ENCODE measurements at regions of chr17 and their contacts with region 1.

Region 1: GRCh38 chr17:18038861-18039534 is at the starts of genes ATPAF2 and GID4:
- DNase-seq: peak; percentile 100
- H3K4me3 ChIP-seq: peak within 1 kb of the TSS; percentile 75 to 83
- H3K27ac ChIP-seq: peak within 1 kb of the TSS; percentile 82 to 83
- H3K4me1 ChIP-seq: peaks cover 24% of the 10 kb centered on the region
- H3K27me3 ChIP-seq: no peaks in the 10 kb centered on the region
- CTCF ChIP-seq: peak in 1 of 3 experiments; percentile 15
- POLR2A ChIP-seq: no peak
- total RNA-seq, gene ATPAF2: 42.6 to 63.3 TPM
- total RNA-seq, gene GID4: 28.6 to 36.1 TPM

Region 2: DNA sequence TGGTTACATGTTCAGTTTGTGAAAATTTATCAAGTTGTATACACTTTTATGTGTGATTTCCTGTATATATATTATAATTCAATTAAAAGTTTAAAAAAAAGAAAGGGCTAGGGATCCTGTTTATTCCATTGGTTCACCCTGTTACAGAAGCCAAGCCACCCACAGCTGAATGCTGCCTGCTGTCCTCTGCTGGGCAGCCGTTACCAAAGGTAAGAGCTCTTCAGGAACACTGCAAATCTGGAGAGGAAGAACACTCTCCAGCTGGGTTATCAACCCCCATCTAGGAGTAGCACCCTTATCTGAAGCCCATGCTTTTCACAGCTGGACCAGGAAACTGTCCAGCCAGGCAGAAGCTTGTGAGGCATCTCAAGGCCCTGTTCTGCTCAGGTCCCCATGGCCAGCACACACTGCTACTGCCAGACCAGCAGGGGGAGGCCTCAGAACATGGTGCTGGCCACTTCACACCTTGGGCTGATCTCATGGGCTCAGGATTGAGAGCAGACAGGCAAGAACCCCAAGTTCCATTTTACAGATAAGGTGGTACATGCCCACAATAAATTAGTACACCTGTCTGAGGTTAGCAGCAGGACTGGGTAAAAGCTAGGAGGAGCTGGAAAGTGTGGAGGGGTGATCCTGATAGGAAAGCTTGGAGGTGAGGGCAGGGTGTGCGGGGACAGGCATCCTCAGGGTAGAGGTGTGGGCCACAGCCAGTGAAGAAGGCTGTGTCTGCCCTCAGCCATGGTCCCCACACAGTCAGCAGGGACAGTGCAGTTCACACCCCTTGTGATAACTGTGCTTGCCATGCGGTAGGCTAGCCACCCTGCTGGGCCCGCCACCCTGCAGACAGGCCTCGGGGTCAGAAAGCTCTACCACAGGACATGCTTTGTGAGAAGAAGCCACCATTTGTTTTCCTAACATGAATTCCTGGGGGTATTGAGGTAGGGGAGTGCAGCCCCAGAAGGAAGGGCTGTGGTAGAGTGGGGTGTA is 147.9 kb before region 1 on chr17:
- intact Hi-C with region 1: loop called (anchors 10 kb)
- DNase-seq: peak; percentile 83
- H3K4me3 ChIP-seq: no peak overlapping the region
- H3K27ac ChIP-seq: no peak overlapping the region
- H3K4me1 ChIP-seq: peaks cover 7% of the 10 kb centered on the region
- H3K27me3 ChIP-seq: no peaks in the 10 kb centered on the region
- CTCF ChIP-seq: peak; percentile 69 to 74 (median 72)
- POLR2A ChIP-seq: no peak

Region 3: DNA sequence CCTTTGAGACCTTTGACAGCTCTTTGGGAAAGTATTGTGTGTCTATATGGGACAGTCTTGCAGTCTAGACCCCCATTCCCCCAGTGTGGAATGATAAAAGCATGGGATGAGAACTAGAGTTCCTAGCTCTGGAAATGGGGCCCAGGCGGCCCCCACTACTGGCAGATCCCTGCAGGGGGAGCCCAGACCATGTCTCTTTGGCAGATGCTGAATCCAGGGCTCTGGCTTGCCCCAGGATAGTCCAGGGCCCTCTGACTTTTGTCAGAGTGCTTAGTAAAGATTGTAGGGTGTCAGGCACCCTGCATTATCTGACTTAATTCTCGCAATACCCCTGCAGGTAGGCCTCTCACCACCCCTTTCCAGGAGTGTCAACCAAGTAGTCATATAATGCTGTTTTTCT is 153.0 kb after region 1 on chr17:
- intact Hi-C with region 1: no loop called
- DNase-seq: no peak
- H3K4me3 ChIP-seq: no peak overlapping the region
- H3K27ac ChIP-seq: no peak overlapping the region
- H3K4me1 ChIP-seq: peaks cover 38% of the 10 kb centered on the region
- H3K27me3 ChIP-seq: no peaks in the 10 kb centered on the region
- CTCF ChIP-seq: no peak
- POLR2A ChIP-seq: no peak

Measured in testis (tissue), 5 donors.